ENCODE measurements at regions of chr14 and their contacts with region 1.

Region 1: DNA sequence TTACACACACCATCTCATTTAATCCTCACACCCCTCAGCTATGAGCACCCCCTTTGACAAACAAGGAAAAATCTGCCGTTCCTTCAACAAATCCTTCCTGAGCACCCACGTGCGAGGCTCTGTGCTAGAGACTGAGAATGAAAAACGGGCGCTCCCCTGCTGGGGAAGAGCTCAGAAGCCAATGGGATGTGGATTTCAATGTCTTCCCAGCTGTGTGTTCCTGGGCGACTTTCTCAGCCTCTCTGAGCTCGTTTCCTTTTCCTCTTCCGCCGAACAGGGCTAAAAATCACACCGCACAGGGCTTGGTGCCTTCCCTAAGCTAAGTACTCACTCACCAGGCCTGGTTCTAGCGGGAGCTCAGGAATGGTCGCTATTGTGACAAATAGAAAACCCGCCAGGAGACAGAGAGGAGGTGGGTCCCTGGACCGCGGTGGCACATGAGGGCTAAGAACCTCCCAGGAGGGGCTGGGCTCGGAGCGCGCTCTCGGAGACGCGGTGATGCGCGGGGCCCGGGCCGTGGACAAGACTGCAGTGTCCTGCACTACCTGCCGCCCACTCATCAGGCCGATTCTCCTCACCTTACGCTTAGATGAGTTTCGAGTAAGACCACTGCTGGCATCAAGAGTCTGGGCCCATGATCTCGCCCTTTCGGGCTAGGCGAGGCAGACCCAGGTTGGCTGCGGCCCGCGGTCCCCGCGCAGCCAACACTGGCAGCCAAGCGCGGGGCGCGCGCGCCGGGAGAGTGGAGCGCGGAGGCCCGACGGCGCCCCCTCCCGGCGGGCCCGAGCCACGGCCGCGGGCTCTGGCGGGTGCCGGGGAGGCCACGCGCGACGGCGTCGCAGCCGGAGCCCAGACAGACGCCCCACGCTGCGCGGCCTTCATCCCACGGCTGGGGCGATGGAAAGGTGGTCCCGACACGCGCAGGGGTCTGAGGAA is 17.0 kb downstream of the ZDHHC22 start:
- DNase-seq: peak; percentile 54
- ATAC-seq: peak; percentile 43
- H3K4me3 Mint-ChIP-seq: peak overlapping the region; percentile 72
- H3K27ac Mint-ChIP-seq: no peak overlapping the region
- H3K4me1 Mint-ChIP-seq: peaks cover 62% of the 10 kb centered on the region
- H3K27me3 Mint-ChIP-seq: peaks cover 7% of the 10 kb centered on the region
- CTCF ChIP-seq: peak; percentile 63; the same call in 1 of the 2 replicates

Region 2: DNA sequence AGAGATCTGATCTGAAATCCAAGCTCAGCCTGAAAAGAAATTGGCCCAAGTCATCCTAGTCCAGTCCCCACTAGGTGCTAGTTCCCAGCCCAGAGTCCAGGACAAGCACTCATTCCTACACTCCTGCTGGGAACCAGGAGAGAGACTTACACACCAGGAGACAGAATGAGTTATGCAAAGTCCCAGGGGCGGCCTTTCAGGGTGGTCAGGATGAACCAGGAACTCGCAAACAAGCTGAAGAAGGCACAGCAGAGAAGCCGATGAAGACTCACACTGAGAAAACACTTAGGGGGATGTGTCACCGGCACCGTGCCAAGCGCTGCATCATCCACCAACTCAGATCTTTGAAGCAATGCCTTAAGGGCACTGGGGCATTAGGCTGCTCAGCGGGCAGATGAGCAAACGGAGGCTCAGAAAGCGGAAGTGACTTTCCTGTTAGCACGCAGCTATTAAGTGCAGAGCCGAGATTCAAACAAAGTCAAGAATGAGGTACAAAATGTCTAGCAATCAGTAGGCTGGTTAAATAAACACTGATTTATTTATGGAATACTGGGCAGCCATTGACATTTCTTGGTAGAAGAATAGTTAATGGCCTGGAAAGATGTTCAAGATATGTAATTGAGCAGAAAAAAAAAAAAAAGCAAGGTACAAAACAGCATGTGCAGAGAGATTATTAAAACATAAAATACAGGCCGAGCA is 219.7 kb before region 1 on chr14:
- CTCF ChIA-PET with region 1: no interaction called
- POLR2A ChIA-PET with region 1: no interaction called
- DNase-seq: no peak
- ATAC-seq: peak; percentile 44
- H3K4me3 Mint-ChIP-seq: no peak overlapping the region
- H3K27ac Mint-ChIP-seq: 0 out of 2 replicates have a peak overlapping the region, but pooled peaks have one; percentile 20
- H3K4me1 Mint-ChIP-seq: peaks cover 8% of the 10 kb centered on the region
- H3K27me3 Mint-ChIP-seq: no peaks in the 10 kb centered on the region
- CTCF ChIP-seq: no peak

Region 3: DNA sequence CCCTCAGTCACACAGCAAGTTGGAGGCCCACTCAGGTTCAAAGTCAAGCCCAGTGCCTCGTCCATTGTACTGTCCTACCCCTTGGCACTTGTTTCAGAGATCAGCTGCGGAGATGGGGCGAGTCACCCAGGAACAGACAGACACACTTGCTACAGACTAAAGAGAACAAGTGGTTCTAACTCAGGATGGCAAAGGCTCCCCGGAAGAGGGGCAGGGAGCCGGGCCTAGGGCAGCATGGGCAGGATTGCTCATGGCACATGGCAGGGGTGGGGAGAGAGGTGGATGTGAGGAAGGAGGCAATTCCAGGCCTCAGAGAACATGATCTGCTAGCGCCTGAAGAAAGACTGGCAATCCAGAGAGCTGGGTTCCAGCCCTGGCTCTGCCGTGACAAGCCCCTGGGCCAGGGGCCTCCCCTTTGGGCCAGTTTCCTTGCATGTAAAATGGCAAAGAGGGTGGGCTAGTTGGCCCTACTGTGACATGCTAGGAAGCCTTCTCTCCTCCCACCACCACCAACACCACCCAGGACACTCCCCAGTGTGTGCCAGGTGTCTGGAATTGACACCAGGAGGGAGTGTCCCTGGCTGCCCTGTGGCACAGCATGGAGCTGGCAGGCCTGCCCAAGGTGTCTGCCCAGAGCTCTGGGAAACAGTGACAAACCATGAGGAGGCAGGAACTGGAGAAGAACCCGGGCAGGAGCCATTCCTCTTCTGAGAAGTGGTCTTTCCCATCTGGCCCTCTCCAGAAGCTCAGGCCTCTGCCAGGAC is 72.2 kb before region 1 on chr14:
- CTCF ChIA-PET with region 1: no interaction called
- POLR2A ChIA-PET with region 1: no interaction called
- DNase-seq: no peak
- ATAC-seq: peak; percentile 8; the same call in 1 of the 2 replicates
- H3K4me3 Mint-ChIP-seq: no peak overlapping the region
- H3K27ac Mint-ChIP-seq: no peak overlapping the region
- H3K4me1 Mint-ChIP-seq: peaks cover 14% of the 10 kb centered on the region
- H3K27me3 Mint-ChIP-seq: no peaks in the 10 kb centered on the region; the same call in 1 of the 2 replicates
- CTCF ChIP-seq: no peak

Region 4: DNA sequence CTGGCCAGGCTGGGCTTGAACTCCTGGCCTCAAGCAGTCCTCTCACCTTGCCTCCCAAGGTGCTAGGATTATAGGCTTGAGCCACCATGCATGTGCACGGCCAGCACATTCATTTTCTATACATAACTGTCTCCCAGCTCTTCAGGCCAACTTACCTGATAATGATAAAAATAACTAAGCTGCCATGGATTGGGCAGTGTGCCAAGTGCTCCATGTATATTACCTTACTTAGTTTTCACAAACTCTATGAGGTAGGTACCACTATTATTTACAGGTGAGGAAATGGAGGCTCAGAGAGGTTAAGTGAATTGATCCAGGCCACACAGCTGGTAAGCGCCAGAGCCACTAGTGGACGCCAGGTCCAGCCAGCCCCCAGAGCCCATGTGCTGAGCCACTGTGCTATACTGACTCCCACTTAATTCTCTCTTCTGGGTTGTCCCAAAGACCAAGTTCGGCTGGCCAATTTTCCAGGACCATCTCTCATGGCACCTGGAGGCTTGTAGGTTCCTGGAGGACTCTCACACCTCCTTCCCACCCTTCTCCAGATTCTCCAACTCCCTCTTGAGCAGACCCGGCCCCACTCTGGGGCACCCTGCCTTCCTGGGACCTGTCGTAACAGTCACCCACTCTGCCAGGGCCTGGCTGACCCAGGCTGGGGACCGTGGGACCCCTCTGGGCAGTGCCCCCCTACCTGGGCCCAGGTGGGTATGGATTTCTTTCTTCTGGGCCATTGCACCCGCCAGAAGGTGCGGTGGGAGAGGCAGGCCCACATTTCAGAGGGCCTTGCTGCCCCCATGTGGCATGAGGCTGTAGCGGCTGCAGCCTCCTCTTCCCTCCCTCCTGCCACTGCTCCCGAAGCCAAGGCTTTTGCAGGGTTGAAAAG is 56.7 kb before region 1 on chr14:
- CTCF ChIA-PET with region 1: interaction called, 14 read pairs
- POLR2A ChIA-PET with region 1: no interaction called
- DNase-seq: peak; percentile 83
- ATAC-seq: peak; percentile 86
- H3K4me3 Mint-ChIP-seq: no peak overlapping the region
- H3K27ac Mint-ChIP-seq: no peak overlapping the region
- H3K4me1 Mint-ChIP-seq: peaks cover 27% of the 10 kb centered on the region
- H3K27me3 Mint-ChIP-seq: no peaks in the 10 kb centered on the region
- CTCF ChIP-seq: peak; percentile 74

Region 5: DNA sequence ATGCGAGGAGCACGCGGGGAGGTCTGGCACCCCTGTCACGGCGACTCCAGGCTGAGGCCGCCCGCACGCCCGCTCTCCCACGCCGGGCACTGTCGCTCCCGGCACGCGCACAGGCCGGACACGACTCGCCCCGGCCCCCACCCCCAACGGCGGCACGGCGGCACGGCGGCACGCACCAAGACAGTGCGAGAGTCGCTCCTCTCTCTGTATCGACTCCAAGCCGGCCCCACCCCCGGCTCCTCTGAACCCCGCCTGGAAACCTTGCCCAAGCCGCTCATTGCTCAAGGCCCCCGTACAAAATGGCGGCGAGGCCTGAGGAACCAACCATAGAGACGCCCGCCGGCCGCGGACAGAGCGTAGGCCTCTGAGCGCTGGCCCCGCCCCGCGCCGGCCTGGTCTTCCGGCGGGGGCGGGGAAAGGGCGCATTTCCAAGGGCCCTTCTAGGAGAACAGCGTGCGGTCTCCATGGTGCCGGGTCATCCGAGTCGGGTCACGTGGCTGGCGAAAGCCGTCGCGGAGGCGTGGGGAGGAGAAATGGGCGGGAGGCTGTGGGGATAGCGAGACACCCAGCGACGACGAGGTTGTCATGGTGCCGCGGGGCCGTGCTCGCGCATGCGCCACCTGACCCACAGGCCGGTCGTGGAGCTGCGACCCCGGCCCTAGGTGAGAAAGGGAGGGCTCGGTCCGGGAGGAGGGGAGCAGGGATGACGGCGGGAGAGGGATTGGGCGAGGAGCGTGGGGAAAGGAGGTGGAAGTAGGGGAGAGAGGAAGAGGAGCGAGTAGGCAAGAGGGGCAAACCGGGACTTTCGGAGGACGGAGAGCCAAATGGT is 26.7 kb before region 1 on chr14 and contains the start of gene CIPC:
- CTCF ChIA-PET with region 1: interaction called, 26 read pairs
- POLR2A ChIA-PET with region 1: interaction called, 10 read pairs
- DNase-seq: peak; percentile 97
- ATAC-seq: peak; percentile 94
- H3K4me3 Mint-ChIP-seq: peak within 1 kb of the TSS; percentile 84
- H3K27ac Mint-ChIP-seq: peak within 1 kb of the TSS; percentile 95
- H3K4me1 Mint-ChIP-seq: peaks cover 52% of the 10 kb centered on the region
- H3K27me3 Mint-ChIP-seq: no peaks in the 10 kb centered on the region
- CTCF ChIP-seq: no peak
- total RNA-seq, gene CIPC: 22.5 to 25.4 TPM (median 24.2 TPM) in 3 replicates

Region 6: GRCh38 chr14:77105145-77105939 is 19.3 kb before region 1 on chr14:
- CTCF ChIA-PET with region 1: interaction called, 57 read pairs
- POLR2A ChIA-PET with region 1: no interaction called
- DNase-seq: no peak
- ATAC-seq: peak; percentile 65
- H3K4me3 Mint-ChIP-seq: peak overlapping the region; percentile 47
- H3K27ac Mint-ChIP-seq: peak overlapping the region; percentile 88
- H3K4me1 Mint-ChIP-seq: peaks cover 70% of the 10 kb centered on the region
- H3K27me3 Mint-ChIP-seq: no peaks in the 10 kb centered on the region
- CTCF ChIP-seq: no peak

Region 7: GRCh38 chr14:77111043-77111442 is 13.6 kb before region 1 on chr14:
- CTCF ChIA-PET with region 1: interaction called, 57 read pairs
- POLR2A ChIA-PET with region 1: no interaction called
- DNase-seq: peak; percentile 69
- ATAC-seq: peak; percentile 92
- H3K4me3 Mint-ChIP-seq: peak overlapping the region; percentile 28
- H3K27ac Mint-ChIP-seq: peak overlapping the region; percentile 100
- H3K4me1 Mint-ChIP-seq: peaks cover 52% of the 10 kb centered on the region
- H3K27me3 Mint-ChIP-seq: no peaks in the 10 kb centered on the region
- CTCF ChIP-seq: no peak

Region 8: DNA sequence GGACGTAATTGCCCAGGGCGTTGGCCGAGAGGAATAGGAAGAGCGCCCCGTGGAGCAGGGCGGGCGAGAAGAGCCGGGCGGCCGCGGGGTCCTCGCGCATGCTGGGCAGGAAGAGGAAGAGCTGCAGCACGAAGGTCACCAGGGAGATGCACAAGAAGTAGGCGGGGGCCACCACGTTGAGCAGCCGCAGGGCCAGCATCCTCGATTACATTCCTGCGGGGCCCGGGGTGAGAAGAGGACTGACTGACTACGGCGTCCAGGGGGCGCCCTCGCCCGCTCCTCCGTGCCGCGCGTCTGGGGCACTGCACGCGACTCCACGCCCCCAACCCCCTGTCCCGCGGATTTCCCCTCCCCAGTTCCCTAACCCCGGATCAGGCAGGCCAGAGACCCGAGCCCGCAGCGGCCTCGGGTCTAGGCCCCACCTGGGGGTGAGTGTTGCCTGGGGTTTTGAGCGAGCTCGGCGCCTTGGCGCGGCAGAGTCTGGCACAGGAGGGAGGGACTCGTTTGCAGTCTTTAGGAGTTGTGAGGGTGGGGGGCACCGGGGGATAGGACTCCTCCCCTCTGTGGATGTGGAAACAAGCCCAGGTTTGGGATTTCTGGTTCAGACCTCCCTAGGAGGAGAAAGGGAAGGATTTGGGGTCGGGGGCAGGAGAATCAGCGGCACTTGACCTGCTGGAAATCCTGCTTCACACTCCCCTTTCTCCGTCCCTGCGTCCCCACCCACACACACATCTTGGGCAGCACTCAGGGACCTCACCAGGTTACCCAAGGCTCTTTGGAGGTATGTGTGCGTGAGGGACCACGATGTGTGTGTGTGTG is 15.1 kb after region 1 on chr14:
- CTCF ChIA-PET with region 1: interaction called, 60 read pairs
- POLR2A ChIA-PET with region 1: no interaction called
- DNase-seq: peak; percentile 90
- ATAC-seq: peak; percentile 58
- H3K4me3 Mint-ChIP-seq: peak overlapping the region; percentile 92
- H3K27ac Mint-ChIP-seq: peak overlapping the region; percentile 32; the same call in 1 of the 2 replicates
- H3K4me1 Mint-ChIP-seq: peaks cover 42% of the 10 kb centered on the region
- H3K27me3 Mint-ChIP-seq: peaks cover 4% of the 10 kb centered on the region; the same call in 1 of the 2 replicates
- CTCF ChIP-seq: peak; percentile 75